ENCODE measurements at regions of chr9 and their contacts with region 1.

Region 1: DNA sequence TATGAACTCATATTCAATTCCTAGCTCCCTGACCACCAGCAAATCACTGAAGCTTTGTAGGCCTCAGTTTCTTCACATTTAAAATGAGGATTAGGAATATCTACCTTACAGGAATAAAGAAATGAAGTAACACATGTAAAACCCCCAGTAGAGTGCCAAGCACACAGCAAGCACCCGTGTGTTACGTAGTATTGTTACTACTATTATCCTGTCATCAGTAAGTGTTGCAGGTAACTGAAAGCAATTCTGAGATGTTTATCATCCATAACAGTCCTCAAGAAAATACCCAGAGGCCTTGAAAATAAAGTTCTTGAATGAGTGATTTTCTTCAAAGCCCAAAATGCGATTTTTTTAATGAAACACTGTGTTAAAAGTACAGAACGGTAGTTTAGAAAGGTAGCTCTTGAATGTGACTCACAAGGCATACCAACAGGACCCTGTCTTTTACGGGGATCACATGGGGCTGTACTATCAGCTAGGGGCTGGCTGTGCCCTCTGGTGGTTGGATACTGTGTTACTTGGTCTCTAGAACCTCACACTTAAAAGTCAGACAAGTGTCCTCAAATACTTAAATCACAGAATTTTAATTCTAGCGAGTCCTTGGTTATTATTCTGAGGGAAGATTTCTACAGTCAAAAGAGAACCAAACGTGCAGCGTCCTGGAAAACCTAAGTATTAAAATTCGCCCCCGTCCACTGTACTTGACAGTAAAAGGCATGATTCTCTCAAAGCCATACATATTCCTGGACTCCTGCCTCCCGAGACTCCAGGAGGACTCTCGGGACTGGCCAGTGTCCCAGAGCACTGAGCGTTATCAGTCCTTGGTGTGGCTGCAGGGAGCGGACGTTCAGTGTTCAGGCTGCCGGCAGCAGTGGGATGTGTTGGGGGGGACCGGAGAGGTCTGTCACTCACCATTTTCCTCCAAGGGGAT is 725 bp downstream of the NDUFB6 start:
- DNase-seq: peak; percentile 84
- ATAC-seq: peak; percentile 79
- H3K4me3 ChIP-seq: peak overlapping the region; percentile 87 to 98 (median 94)
- H3K4me3 Mint-ChIP-seq: peak overlapping the region; percentile 100
- H3K27ac ChIP-seq: peak overlapping the region; percentile 82 to 83
- H3K27ac Mint-ChIP-seq: peak overlapping the region; percentile 98
- H3K4me1 ChIP-seq: peaks cover 15 to 17% of the 10 kb centered on the region in 2 donors
- H3K4me1 Mint-ChIP-seq: peaks cover 25% of the 10 kb centered on the region
- H3K27me3 ChIP-seq: no peaks in the 10 kb centered on the region
- H3K27me3 Mint-ChIP-seq: peaks cover 3% of the 10 kb centered on the region
- CTCF ChIP-seq: peak; percentile 88

Region 2: GRCh38 chr9:32378993-32379729 is 193.1 kb before region 1 on chr9:
- CTCF ChIA-PET with region 1: interaction called, 522 read pairs
- POLR2A ChIA-PET with region 1: interaction called, 7 read pairs
- intact Hi-C with region 1: loop called (anchors 1 kb)
- DNase-seq: peak; percentile 80
- ATAC-seq: peak; percentile 81
- H3K4me3 ChIP-seq: no peak overlapping the region
- H3K4me3 Mint-ChIP-seq: no peak overlapping the region
- H3K27ac ChIP-seq: no peak overlapping the region
- H3K27ac Mint-ChIP-seq: no peak overlapping the region
- H3K4me1 ChIP-seq: peaks cover 6 to 17% of the 10 kb centered on the region in 2 donors
- H3K4me1 Mint-ChIP-seq: peaks cover 13% of the 10 kb centered on the region
- H3K27me3 ChIP-seq: peaks cover 0 to 29% (median 20%) of the 10 kb centered on the region in 4 experiments
- H3K27me3 Mint-ChIP-seq: peaks cover 35% of the 10 kb centered on the region
- CTCF ChIP-seq: peak; percentile 83

Region 3: DNA sequence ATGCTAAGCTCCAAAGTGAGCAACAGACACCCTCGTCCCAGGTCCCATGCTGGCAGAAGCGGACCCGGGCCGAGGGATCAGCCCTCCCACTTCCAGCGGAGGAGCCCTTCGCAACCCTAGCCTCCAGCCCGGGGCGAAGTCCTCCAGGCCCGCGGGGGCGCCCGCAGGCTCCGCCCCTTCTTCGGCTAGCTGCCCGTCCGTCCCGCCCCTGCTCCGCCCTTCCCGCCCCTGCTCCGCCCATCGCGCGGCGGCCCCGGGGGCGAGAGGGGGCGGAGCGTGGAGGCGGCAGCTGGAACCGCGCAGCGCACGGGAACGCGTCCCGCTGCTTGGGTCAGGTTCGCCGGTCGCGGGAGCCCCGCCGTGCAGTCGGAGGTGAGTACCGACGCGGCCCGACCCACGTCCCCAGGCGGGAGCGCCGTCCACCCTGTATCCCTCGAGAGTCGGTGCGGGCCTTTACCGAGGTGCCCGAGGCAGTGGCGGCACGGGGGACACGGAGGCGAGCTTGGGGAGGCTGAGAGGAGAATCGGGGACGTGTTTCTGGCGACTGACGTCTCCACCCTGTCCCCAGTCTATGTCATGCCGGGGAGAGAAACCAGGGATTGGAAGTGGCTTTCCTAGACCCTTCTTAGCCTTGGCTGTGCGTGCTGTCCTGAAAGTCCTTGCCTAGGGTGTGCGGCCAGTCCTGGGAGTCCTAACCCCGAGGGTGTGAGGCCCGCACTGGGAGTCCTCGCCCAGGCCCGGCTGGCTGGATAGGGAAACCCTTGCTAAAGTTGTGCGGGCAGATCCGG is 187.7 kb before region 1 on chr9 and contains the start of gene ACO1:
- CTCF ChIA-PET with region 1: interaction called, 522 read pairs
- POLR2A ChIA-PET with region 1: interaction called, 7 read pairs
- intact Hi-C with region 1: loop called (anchors 1 kb)
- DNase-seq: peak; percentile 91
- ATAC-seq: peak; percentile 99
- H3K4me3 ChIP-seq: peak within 1 kb of the TSS; percentile 52 to 89 (median 84)
- H3K4me3 Mint-ChIP-seq: peak within 1 kb of the TSS; percentile 90
- H3K27ac ChIP-seq: peak within 1 kb of the TSS; percentile 16 to 61
- H3K27ac Mint-ChIP-seq: peak within 1 kb of the TSS; percentile 78
- H3K4me1 ChIP-seq: peaks cover 10 to 17% of the 10 kb centered on the region in 2 donors
- H3K4me1 Mint-ChIP-seq: peaks cover 8% of the 10 kb centered on the region
- H3K27me3 ChIP-seq: peaks cover 0 to 29% (median 15%) of the 10 kb centered on the region in 4 experiments
- H3K27me3 Mint-ChIP-seq: peaks cover 24% of the 10 kb centered on the region
- CTCF ChIP-seq: no peak
- total RNA-seq, gene ACO1: 9.1 and 9.9 TPM in 2 replicates

Region 4: DNA sequence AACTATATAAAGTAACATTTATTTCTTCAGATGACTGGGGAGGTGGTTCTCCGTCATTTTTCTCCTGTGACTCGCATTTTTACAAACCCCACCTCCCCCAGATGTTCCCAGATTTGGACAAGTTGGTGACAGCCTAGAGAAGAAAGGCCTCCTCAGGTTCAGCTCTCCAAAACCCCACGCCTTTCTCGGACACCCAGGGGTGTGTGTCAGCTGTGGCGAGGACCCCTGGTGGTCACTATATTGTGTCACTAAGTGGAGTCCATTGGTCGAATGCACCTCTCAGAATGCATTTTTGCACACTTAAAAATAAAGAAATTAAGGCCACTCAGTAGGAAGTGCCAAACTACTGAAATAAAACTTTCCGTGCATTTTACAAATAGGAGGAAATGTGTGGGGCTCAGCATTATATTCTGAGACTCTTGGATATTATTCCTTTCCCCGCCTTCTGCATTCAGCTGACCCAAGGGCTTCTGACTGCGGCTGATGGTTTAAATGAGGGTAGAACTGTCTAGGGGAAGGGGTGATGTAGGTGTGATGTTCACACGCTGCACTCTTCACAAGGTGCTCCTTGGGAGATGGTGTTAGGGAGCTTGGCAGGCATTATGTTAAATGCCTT is 140.2 kb before region 1 on chr9:
- CTCF ChIA-PET with region 1: interaction called, 3 read pairs
- POLR2A ChIA-PET with region 1: no interaction called
- intact Hi-C with region 1: loop called (anchors 5 kb)
- DNase-seq: peak; percentile 44
- ATAC-seq: peak; percentile 49
- H3K4me3 ChIP-seq: no peak overlapping the region
- H3K4me3 Mint-ChIP-seq: no peak overlapping the region
- H3K27ac ChIP-seq: no peak overlapping the region
- H3K27ac Mint-ChIP-seq: no peak overlapping the region
- H3K4me1 ChIP-seq: no peaks in the 10 kb centered on the region
- H3K4me1 Mint-ChIP-seq: no peaks in the 10 kb centered on the region
- H3K27me3 ChIP-seq: no peaks in the 10 kb centered on the region
- H3K27me3 Mint-ChIP-seq: no peaks in the 10 kb centered on the region
- CTCF ChIP-seq: peak; percentile 49

Region 5: DNA sequence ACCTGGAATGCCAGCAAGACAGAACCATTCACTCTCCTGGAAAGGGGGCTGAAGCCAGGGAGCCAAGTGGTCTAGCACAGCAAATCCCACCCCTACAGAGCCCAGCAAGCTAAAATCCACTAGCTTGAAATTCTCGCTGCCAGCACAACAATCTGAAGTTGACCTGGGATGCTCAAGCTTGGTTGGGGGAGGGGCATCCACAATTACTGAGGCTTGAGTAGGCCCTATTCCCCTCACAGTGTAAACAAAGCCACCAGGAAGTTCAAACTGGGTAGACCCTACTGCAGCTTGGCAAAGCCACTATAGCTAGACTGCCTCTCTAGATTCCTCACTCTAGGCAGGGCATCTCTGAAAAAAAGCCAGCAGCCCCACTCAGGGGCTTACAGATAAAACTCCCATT is 63.5 kb before region 1 on chr9:
- CTCF ChIA-PET with region 1: no interaction called
- POLR2A ChIA-PET with region 1: no interaction called
- intact Hi-C with region 1: no loop called
- DNase-seq: no peak
- ATAC-seq: no peak
- H3K4me3 ChIP-seq: no peak overlapping the region
- H3K4me3 Mint-ChIP-seq: no peak overlapping the region
- H3K27ac ChIP-seq: no peak overlapping the region
- H3K27ac Mint-ChIP-seq: no peak overlapping the region
- H3K4me1 ChIP-seq: peaks cover 0 to 3% of the 10 kb centered on the region in 2 donors
- H3K4me1 Mint-ChIP-seq: peaks cover 34% of the 10 kb centered on the region
- H3K27me3 ChIP-seq: no peaks in the 10 kb centered on the region
- H3K27me3 Mint-ChIP-seq: no peaks in the 10 kb centered on the region
- CTCF ChIP-seq: no peak

Region 6: DNA sequence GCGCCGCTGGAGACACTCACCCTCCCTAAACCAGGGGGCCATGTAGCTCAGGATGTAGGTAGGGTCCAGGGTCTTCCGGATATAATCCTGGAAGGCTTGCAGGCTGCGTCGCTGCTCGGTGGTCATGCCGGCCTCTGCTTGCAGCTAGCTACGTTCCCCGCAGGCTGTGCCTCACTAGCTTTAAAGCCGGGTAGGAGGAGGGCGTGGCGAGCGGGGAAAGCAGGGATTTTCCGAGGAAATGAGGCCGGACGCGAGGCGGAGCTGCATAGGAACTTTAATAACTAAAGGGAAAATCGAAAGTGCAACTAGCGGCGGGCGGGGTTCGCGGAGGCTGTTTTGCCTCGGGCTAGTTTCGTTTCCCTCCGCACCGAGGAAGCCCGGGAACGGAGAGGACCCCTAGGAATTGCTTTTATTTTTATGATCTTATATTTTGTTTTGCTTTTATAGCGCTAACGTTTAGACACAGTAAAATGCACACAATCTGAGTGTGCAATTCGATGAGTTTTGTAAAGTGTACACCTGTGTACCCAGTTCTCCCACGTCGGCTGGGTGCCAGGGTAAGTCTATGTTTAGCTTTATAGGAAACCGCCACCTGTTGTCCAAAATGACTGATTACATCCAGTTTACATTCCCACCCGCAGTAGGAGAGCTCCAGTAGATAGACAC is 46.1 kb before region 1 on chr9 and contains the start of gene RIGI:
- CTCF ChIA-PET with region 1: interaction called, 17 read pairs
- POLR2A ChIA-PET with region 1: interaction called, 5 read pairs
- intact Hi-C with region 1: loop called (anchors 1 kb)
- DNase-seq: peak; percentile 82
- ATAC-seq: peak; percentile 78
- H3K4me3 ChIP-seq: peak within 1 kb of the TSS; percentile 73 to 98 (median 84)
- H3K4me3 Mint-ChIP-seq: peak within 1 kb of the TSS; percentile 95
- H3K27ac ChIP-seq: peak within 1 kb of the TSS; percentile 73 to 74
- H3K27ac Mint-ChIP-seq: peak within 1 kb of the TSS; percentile 93
- H3K4me1 ChIP-seq: peaks cover 27 to 31% of the 10 kb centered on the region in 2 donors
- H3K4me1 Mint-ChIP-seq: peaks cover 54% of the 10 kb centered on the region
- H3K27me3 ChIP-seq: no peaks in the 10 kb centered on the region
- H3K27me3 Mint-ChIP-seq: no peaks in the 10 kb centered on the region
- CTCF ChIP-seq: peak; percentile 59
- total RNA-seq, gene RIGI: 24.9 and 26.3 TPM in 2 replicates

Region 7: GRCh38 chr9:32550562-32551433 is 21.4 kb before region 1 on chr9:
- CTCF ChIA-PET with region 1: interaction called, 30 read pairs
- POLR2A ChIA-PET with region 1: interaction called, 10 read pairs
- intact Hi-C with region 1: loop called (anchors 1 kb)
- DNase-seq: peak; percentile 97
- ATAC-seq: peak; percentile 84
- H3K4me3 ChIP-seq: peak overlapping the region; percentile 86 to 98 (median 87)
- H3K4me3 Mint-ChIP-seq: peak overlapping the region; percentile 91
- H3K27ac ChIP-seq: peak overlapping the region; percentile 89 to 92
- H3K27ac Mint-ChIP-seq: peak overlapping the region; percentile 91
- H3K4me1 ChIP-seq: peaks cover 14 to 15% of the 10 kb centered on the region in 2 donors
- H3K4me1 Mint-ChIP-seq: peaks cover 34% of the 10 kb centered on the region
- H3K27me3 ChIP-seq: no peaks in the 10 kb centered on the region
- H3K27me3 Mint-ChIP-seq: no peaks in the 10 kb centered on the region
- CTCF ChIP-seq: peak; percentile 5

Region 8: DNA sequence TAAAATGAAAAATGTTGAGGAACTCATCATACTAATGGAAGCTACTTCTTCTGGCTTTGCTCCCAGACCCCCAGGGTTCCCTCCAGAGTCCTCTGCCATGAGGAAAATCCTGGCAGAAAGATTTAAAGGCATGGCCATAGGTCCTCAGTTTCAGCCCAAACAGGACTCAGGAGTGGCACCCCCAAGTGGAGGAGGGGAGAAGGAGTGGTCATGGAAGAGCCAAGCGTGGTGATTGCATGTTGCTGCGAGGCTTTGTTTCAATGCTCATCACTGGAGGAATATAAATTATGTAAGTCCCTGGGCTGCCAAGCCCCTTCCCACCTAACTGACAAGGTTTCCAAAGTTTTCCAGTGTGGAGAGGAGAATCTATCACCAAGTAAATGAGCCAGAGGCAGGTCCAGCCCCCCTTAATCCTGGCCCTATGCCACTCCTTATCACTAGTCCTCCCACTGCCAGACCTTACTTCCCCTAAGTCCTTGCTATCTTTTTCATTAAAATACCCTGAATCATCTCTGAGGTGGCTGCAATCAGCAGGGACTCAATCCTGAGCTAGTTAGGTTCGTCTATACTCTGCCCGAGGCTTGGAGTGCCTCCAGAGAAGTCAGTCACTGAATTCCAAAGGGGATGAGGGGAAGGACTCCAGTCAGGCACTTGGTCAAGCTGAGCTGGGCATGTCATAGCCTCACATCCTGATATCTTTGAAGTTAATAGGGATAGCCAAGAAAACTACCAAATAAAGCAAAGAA is 133.9 kb after region 1 on chr9:
- CTCF ChIA-PET with region 1: no interaction called
- POLR2A ChIA-PET with region 1: no interaction called
- intact Hi-C with region 1: no loop called
- DNase-seq: no peak
- ATAC-seq: no peak
- H3K4me3 ChIP-seq: no peak overlapping the region
- H3K4me3 Mint-ChIP-seq: no peak overlapping the region
- H3K27ac ChIP-seq: no peak overlapping the region
- H3K27ac Mint-ChIP-seq: no peak overlapping the region
- H3K4me1 ChIP-seq: no peaks in the 10 kb centered on the region
- H3K4me1 Mint-ChIP-seq: no peaks in the 10 kb centered on the region
- H3K27me3 ChIP-seq: no peaks in the 10 kb centered on the region
- H3K27me3 Mint-ChIP-seq: peaks cover 13% of the 10 kb centered on the region
- CTCF ChIP-seq: no peak

Measured in B cell (primary cell).